AG04450 (cell line): ENCODE measurements at regions of chr7 and their contacts with region 1.

Region 1: GRCh38 chr7:70693686-70694360 is 438.1 kb upstream of the GALNT17 start:
- DNase-seq: no peak
- H3K4me3 ChIP-seq: peak overlapping the region; percentile 79
- H3K27ac ChIP-seq: no peak overlapping the region
- H3K27me3 ChIP-seq: no peaks in the 10 kb centered on the region
- CTCF ChIP-seq: no peak

Region 2: DNA sequence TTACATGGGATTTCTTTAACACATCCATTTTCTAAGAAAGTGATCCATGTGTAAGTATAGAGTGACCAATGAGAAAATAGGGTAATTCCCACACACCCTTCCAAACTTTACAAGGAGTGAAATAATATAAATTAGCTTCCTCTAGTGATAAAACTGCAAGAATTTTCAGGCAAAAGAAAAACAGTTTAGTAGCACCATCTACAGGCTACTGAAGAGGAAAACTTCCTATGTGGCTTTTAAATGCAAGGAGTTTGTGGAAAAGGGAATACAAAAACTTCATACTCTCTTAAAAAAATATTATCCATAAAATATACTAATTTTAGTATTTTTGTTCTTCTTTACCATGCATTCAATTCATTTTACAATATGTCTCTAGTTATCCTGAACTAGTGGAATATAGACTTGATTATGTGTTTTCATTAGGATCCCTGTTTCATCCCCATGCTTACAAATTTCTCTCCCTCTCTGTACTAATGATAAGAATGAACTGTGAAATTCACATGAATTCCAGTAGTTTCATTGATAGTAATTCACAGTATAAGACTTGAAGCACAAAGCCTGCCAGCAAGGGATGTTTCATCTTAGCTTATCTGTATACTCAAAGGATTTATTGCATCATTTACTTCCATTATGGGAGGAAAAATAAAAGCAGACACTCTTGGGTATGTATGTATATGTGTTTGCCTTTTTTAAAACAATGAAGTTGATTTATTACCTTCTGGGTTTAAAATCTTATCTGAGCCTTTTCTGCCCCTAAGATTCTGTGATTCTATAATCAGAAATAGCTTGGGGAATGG is 652.7 kb before region 1 on chr7:
- CTCF ChIA-PET with region 1: interaction called, 25 read pairs
- POLR2A ChIA-PET with region 1: no interaction called
- DNase-seq: no peak
- H3K4me3 ChIP-seq: no peak overlapping the region
- H3K27ac ChIP-seq: no peak overlapping the region
- H3K27me3 ChIP-seq: no peaks in the 10 kb centered on the region
- CTCF ChIP-seq: peak; percentile 9; the same call in 1 of the 2 replicates

Region 3: DNA sequence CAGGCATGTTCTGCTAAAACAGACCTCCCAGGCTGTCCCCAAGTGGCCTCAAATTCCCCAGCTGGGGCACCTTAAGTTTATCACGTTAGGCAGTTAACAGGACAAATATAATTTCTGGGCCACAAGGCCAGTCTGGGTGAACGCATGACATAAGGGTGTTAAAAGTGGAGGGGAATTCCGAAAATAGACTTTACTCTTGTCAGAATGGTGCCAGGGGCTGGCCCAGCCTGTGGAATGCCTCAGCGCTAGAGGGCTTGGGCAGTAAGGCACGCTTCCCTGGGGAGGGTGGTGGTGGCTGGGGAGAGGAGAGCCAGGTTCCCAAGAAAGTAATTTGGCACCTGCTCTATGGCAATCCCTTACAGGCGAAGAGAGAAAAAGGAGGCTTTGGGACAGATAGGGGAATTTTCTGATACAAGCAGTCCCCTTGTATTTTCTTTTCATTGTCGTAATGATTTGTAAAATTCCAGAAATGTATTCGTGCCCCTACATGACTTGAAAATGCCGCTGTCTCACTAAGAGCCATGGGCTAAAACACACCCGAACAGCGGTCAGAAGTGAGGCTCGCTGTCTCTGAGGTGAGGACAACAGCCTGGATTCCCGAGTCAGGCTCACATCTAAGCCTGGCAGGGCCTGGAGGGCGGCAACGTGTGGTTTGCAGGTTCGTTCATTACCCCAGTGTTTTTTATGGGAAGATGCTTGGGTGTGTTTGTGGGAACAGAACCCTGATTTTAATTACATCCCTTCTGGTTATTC is 25.0 kb before region 1 on chr7:
- CTCF ChIA-PET with region 1: no interaction called
- POLR2A ChIA-PET with region 1: no interaction called
- DNase-seq: no peak
- H3K4me3 ChIP-seq: no peak overlapping the region
- H3K27ac ChIP-seq: no peak overlapping the region
- H3K27me3 ChIP-seq: peaks cover 5% of the 10 kb centered on the region
- CTCF ChIP-seq: no peak

Region 4: DNA sequence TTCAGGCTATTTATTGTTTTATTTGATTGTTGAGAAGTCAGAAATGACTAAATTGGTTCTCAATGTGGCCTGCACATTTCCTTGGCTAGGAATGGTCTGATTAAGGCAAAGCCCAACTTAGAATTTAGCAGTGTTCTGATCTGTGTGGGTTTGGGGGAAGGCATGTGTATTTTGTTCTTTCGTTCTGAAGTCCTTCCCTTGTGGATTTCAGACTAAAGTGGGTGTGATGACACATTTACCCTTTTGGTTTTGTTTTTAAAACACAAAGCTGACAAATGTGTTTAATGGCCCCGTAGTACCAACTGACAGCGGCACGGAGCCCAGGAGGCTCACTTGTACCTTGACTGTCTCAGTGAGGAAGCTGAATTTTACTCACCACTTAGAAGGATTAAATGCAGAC is 14.2 kb before region 1 on chr7:
- CTCF ChIA-PET with region 1: no interaction called
- POLR2A ChIA-PET with region 1: no interaction called
- DNase-seq: no peak
- H3K4me3 ChIP-seq: no peak overlapping the region
- H3K27ac ChIP-seq: no peak overlapping the region
- H3K27me3 ChIP-seq: no peaks in the 10 kb centered on the region
- CTCF ChIP-seq: no peak

Region 5: GRCh38 chr7:70710011-70710480 is 16.2 kb after region 1 on chr7:
- CTCF ChIA-PET with region 1: interaction called, 16 read pairs
- POLR2A ChIA-PET with region 1: no interaction called
- DNase-seq: peak; percentile 37
- H3K4me3 ChIP-seq: no peak overlapping the region
- H3K27ac ChIP-seq: no peak overlapping the region
- H3K27me3 ChIP-seq: no peaks in the 10 kb centered on the region
- CTCF ChIP-seq: no peak

Region 6: DNA sequence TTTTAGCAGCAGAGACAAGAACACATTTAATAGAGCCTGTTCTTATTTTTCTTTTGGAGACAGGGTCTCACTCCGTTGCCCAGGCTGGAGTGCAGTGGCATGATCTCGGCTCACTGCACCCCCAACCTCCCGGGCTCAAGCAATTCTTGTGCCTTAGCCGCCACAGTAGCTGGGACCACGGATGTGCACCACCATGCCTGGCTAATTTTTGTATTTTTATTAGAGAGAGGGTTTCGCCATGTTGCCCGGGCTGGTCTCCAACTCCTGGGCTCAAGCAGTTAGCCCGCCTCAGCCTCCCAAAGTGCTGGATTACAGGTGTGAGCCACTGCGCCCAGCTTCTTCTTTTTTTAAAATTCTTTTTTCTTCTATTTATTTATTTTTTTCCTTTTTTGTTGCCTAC is 461.4 kb after region 1 on chr7:
- CTCF ChIA-PET with region 1: interaction called, 11 read pairs
- POLR2A ChIA-PET with region 1: no interaction called
- DNase-seq: no peak
- H3K4me3 ChIP-seq: no peak overlapping the region
- H3K27ac ChIP-seq: no peak overlapping the region
- H3K27me3 ChIP-seq: no peaks in the 10 kb centered on the region
- CTCF ChIP-seq: no peak